ENCODE measurements at regions of chr12 and their contacts with region 1.

Region 1: GRCh38 chr12:27821259-27821973 is 41.4 kb upstream of the MANSC4 start:
- DNase-seq: peak; percentile 28
- H3K4me3 Mint-ChIP-seq: no peak overlapping the region
- H3K27ac Mint-ChIP-seq: no peak overlapping the region
- H3K4me1 Mint-ChIP-seq: peaks cover 43% of the 10 kb centered on the region
- H3K27me3 Mint-ChIP-seq: peaks cover 33% of the 10 kb centered on the region

Region 2: GRCh38 chr12:27332407-27333301 is 488.8 kb before region 1 on chr12 and contains the start of gene BMAL2:
- CTCF ChIA-PET with region 1: no interaction called
- POLR2A ChIA-PET with region 1: interaction called, 5 read pairs
- intact Hi-C with region 1: loop called (anchors 1 kb)
- DNase-seq: peak; percentile 54
- H3K4me3 Mint-ChIP-seq: peak within 1 kb of the TSS; percentile 91
- H3K27ac Mint-ChIP-seq: peak within 1 kb of the TSS; percentile 84
- H3K4me1 Mint-ChIP-seq: peaks cover 49% of the 10 kb centered on the region
- H3K27me3 Mint-ChIP-seq: peaks cover 31% of the 10 kb centered on the region
- total RNA-seq, gene BMAL2: 14.9 to 15.2 TPM

Region 3: GRCh38 chr12:27710592-27711316 is 110.7 kb before region 1 on chr12 and contains the start of gene MRPS35:
- CTCF ChIA-PET with region 1: interaction called, 9 read pairs
- POLR2A ChIA-PET with region 1: no interaction called
- intact Hi-C with region 1: loop called (anchors 1 kb)
- DNase-seq: peak; percentile 95
- H3K4me3 Mint-ChIP-seq: peak within 1 kb of the TSS; percentile 93
- H3K27ac Mint-ChIP-seq: peak within 1 kb of the TSS; percentile 90
- H3K4me1 Mint-ChIP-seq: peaks cover 17% of the 10 kb centered on the region
- H3K27me3 Mint-ChIP-seq: peaks cover 3% of the 10 kb centered on the region
- total RNA-seq, gene MRPS35: 49.2 to 50.2 TPM

Region 4: DNA sequence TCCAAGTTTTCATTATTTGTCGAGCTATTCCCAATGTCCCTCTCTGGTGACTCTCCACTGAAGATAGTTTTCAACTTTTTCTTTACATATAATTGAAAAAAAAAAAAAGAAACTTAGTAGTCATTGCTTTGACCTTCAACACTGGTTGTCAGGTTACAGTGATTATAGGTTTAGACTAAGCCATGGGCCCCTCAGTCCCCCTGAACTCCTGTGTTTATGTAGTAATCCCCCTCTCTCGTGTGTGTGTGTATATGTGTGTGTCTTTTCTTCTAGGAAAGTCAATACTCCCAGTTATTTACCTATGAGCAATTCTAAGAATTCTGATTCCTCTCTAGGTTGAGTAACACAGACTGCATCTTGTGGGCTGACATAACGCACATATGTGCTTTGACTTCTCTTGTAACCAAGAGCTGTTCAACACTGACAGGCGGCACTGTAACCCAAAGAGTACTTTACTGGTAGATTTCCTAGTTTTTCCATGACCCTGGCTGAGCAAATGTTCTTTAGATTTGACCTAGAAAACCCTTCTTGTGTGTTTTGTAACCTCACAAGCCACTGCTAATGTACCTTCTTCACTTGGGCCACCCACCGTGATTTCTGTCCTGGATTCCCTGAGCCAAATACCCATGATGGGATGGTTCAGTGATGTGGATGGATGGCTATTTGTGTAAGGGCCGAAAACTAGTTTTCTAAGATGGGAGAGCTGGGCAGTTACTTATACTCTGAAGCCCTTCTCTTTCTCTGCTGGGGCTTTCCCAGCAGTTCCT is 26.4 kb before region 1 on chr12:
- CTCF ChIA-PET with region 1: interaction called, 24 read pairs
- POLR2A ChIA-PET with region 1: no interaction called
- intact Hi-C with region 1: no loop called
- DNase-seq: no peak
- H3K4me3 Mint-ChIP-seq: no peak overlapping the region
- H3K27ac Mint-ChIP-seq: no peak overlapping the region
- H3K4me1 Mint-ChIP-seq: peaks cover 5% of the 10 kb centered on the region
- H3K27me3 Mint-ChIP-seq: no peaks in the 10 kb centered on the region

Region 5: DNA sequence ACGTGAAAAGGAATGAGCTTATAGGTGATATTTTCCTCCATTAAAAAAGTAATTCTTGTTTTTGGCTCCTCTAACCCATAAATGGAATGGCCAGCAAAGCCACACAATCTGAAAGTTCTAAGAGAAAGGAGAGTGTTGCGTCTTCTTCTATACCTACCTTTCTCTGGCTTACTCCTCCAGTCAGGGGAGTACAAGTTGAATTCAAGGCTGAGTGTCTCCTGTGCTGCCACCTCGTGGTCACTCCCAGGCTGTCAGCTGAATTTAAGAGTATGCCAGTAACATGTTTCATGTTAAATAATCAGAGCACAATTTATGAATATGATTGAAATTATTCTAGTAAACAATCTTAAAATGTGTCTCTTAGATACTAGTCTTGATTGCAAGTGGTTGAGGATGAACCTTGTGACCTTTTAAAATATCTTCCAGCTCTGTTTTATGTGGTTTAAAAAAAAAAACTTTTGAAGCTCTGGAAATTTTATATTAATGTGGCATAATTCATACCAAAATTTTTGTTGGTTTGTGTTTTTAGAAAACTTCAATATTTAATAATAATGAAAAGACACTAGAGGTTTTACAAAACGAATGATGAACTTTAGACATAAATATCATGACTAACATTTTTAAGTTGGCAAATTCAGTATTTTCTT is 119.5 kb after region 1 on chr12:
- CTCF ChIA-PET with region 1: interaction called, 20 read pairs
- POLR2A ChIA-PET with region 1: no interaction called
- intact Hi-C with region 1: loop called (anchors 2 kb)
- DNase-seq: peak; percentile 87
- H3K4me3 Mint-ChIP-seq: no peak overlapping the region
- H3K27ac Mint-ChIP-seq: no peak overlapping the region
- H3K4me1 Mint-ChIP-seq: no peaks in the 10 kb centered on the region
- H3K27me3 Mint-ChIP-seq: peaks cover 8% of the 10 kb centered on the region

Region 6: DNA sequence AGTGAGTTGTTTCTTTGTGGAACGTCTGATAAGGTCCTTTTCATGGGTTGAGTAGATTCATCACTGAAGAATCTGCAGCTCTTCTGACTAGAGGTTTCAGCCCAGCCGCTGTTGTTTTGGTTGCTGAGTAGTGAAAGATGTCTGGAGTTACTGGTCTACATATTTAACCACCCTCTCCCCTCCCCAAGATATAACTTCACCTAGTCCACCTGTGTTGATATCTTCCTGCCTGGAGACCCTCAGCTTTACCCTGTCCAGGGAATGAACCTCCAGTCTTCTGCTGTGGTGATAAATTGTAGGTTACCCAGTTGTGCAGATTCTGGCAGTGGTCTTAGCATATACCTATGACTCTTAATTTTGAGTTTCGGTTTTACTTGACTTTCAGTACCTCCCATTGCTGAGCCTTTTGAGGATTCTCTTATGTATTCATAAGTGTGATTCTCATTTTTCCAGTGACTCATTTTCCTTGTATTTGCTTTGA is 431.8 kb after region 1 on chr12:
- CTCF ChIA-PET with region 1: no interaction called
- POLR2A ChIA-PET with region 1: interaction called, 3 read pairs
- intact Hi-C with region 1: loop called (anchors 1 kb)
- DNase-seq: peak; percentile 66
- H3K4me3 Mint-ChIP-seq: peak overlapping the region; percentile 54
- H3K27ac Mint-ChIP-seq: peak overlapping the region; percentile 86
- H3K4me1 Mint-ChIP-seq: peaks cover 67% of the 10 kb centered on the region
- H3K27me3 Mint-ChIP-seq: no peaks in the 10 kb centered on the region